ENCODE measurements at regions of chr7 and their contacts with region 1.

Region 1: DNA sequence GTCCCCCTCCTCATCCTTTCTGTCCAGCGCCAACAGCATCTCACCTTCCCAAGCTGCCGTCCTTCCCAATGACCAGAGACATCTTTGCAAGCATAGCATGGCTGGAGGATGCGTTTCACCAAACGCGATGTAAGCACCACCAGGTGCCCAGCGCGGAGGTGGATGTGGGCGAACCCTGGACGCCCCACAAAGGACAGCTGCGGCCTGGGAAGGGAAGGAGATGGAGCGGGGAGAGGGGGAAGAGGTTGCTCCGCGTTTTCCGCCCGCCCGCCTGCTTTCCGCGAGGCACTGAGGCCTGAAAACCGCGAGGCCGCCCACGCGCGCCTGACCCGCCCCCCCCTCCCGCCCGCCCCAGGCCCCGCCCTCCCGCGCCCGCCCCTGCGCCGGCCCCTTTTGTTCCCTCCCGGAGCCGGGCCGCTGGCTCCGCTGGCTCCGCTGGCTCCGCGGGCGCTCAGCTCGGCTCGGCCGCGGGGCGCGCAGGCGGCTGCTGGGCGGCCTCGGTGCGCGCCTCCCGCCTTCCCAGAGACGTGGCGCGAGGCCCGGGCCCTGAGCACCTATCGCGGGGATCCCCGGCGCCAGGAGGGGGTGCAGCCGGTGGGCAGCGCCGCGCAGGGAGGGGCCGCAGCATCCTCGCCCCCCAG is at the start of gene CLIP2:
- DNase-seq: peak; percentile 69
- ATAC-seq: peak; percentile 62
- H3K4me3 Mint-ChIP-seq: peak within 1 kb of the TSS; percentile 91
- H3K27ac Mint-ChIP-seq: peak within 1 kb of the TSS; percentile 91
- H3K4me1 Mint-ChIP-seq: peaks cover 62% of the 10 kb centered on the region
- H3K27me3 Mint-ChIP-seq: no peaks in the 10 kb centered on the region
- CTCF ChIP-seq: no peak
- total RNA-seq, gene CLIP2: 60.4 and 61.7 TPM in 2 replicates

Region 2: DNA sequence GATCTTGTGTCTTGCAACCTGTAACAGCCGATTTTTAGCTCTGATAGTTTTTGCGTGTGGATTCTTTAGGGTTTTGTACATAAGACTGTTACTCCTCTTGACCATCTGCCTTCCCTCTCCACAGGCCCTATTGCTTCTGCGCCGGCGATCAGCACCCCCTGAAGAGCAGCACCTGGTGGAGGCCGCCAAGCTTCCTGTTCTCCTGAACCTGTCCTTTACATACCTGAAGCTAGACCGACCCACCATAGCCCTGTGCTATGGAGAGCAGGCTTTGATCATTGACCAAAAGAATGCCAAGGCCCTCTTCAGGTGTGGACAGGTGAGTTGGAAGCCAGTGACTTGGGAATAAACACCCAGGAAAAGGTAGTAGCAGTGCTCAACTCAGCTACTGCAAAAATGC is 948.6 kb before region 1 on chr7:
- CTCF ChIA-PET with region 1: no interaction called
- POLR2A ChIA-PET with region 1: no interaction called
- intact Hi-C with region 1: no loop called
- DNase-seq: no peak
- ATAC-seq: no peak
- H3K4me3 Mint-ChIP-seq: no peak overlapping the region
- H3K27ac Mint-ChIP-seq: no peak overlapping the region
- H3K4me1 Mint-ChIP-seq: peaks cover 2% of the 10 kb centered on the region
- H3K27me3 Mint-ChIP-seq: peaks cover 11% of the 10 kb centered on the region
- CTCF ChIP-seq: no peak

Region 3: DNA sequence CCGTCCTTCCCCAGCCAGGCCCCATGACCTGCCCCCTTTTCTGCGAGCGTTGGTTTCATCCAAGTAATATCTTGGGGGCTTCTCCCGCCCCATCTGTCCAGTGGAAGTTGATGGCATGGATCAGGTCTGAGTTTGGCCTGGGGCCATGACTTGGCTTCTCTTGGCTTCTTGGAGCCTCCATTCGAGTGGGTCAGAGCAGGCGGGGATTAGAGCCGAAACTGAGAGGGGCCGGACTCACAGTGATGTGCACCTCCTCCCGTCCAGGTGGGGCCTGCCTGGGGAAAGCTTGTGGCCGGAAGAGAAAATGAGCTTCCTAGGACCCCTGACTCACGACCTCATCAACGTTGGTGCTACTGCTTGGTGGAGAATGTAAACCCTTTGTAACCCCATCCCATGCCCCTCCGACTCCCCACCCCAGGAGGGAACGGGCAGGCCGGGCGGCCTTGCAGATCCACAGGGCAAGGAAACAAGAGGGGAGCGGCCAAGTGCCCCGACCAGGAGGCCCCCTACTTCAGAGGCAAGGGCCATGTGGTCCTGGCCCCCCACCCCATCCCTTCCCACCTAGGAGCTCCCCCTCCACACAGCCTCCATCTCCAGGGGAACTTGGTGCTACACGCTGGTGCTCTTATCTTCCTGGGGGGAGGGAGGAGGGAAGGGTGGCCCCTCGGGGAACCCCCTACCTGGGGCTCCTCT is 220.6 kb before region 1 on chr7:
- CTCF ChIA-PET with region 1: no interaction called
- POLR2A ChIA-PET with region 1: no interaction called
- intact Hi-C with region 1: loop called (anchors 5 kb)
- DNase-seq: no peak
- ATAC-seq: no peak
- H3K4me3 Mint-ChIP-seq: no peak overlapping the region
- H3K27ac Mint-ChIP-seq: no peak overlapping the region
- H3K4me1 Mint-ChIP-seq: peaks cover 2% of the 10 kb centered on the region
- H3K27me3 Mint-ChIP-seq: no peaks in the 10 kb centered on the region
- CTCF ChIP-seq: no peak

Region 4: GRCh38 chr7:74217455-74218342 is 71.4 kb before region 1 on chr7:
- CTCF ChIA-PET with region 1: no interaction called
- POLR2A ChIA-PET with region 1: interaction called, 150 read pairs
- intact Hi-C with region 1: no loop called
- DNase-seq: peak; percentile 51
- ATAC-seq: peak; percentile 59
- H3K4me3 Mint-ChIP-seq: peak overlapping the region; percentile 69
- H3K27ac Mint-ChIP-seq: peak overlapping the region; percentile 90
- H3K4me1 Mint-ChIP-seq: peaks cover 63% of the 10 kb centered on the region
- H3K27me3 Mint-ChIP-seq: no peaks in the 10 kb centered on the region
- CTCF ChIP-seq: no peak

Region 5: DNA sequence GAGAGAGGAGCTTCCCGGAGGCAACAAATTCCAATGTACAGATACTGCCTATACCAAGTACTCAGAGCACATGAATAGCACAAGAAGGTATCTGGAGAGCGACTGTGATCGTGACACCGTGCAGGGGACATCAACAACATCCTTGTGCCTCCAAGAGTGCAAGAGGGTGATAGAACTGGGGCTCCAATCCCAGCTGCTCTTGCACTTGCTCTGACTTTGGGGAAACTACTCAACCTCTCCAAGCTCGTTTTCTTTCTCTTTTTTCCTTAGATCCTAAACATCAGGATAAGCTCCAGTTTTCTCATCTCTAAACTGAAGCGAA is 47.1 kb before region 1 on chr7:
- CTCF ChIA-PET with region 1: no interaction called
- POLR2A ChIA-PET with region 1: interaction called, 10 read pairs
- intact Hi-C with region 1: no loop called
- DNase-seq: no peak
- ATAC-seq: peak; percentile 30
- H3K4me3 Mint-ChIP-seq: peak overlapping the region; percentile 74
- H3K27ac Mint-ChIP-seq: peak overlapping the region; percentile 81
- H3K4me1 Mint-ChIP-seq: peaks cover 32% of the 10 kb centered on the region
- H3K27me3 Mint-ChIP-seq: no peaks in the 10 kb centered on the region
- CTCF ChIP-seq: no peak

Region 6: DNA sequence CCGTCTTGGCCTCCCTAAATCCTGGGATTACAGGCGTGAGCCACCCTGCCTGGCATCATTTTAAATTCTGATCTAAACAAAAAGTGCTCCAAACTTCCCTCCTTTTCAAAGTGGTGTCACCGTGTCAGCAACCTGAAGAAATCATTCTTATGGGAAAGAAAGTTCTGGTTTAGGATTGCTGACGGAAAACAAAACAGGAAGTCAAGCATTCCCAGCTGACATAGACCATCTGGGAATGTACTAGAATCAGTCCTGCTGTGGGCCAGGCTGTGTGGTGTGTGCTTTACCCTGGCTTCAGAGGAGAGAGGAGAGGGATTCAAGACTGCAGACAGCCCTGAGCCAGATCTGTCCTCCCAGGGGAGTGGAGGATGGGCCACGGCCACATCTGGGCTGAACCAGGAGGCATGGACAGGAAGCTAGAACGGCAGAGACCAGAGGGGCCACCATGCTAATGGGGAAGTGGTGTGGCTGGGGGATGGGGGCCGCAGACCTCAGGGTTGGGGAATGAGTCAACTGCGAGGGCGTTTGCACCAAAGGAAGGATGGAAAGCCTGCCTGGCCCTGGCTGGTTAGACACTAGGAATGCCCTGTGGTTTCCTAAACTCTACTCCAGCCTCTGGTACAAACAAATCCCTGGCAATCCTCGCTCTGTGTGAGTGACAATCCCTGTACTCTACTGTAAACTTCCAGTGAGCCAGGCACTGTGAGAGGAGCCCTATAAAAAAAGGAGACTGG is 16.7 kb before region 1 on chr7:
- CTCF ChIA-PET with region 1: interaction called, 10 read pairs
- POLR2A ChIA-PET with region 1: interaction called, 344 read pairs
- intact Hi-C with region 1: loop called (anchors 1 kb)
- DNase-seq: peak; percentile 71
- ATAC-seq: peak; percentile 81
- H3K4me3 Mint-ChIP-seq: peak overlapping the region; percentile 70
- H3K27ac Mint-ChIP-seq: peak overlapping the region; percentile 80
- H3K4me1 Mint-ChIP-seq: peaks cover 55% of the 10 kb centered on the region
- H3K27me3 Mint-ChIP-seq: no peaks in the 10 kb centered on the region
- CTCF ChIP-seq: no peak

Region 7: GRCh38 chr7:74365322-74366022 is 76.3 kb after region 1 on chr7:
- CTCF ChIA-PET with region 1: no interaction called
- POLR2A ChIA-PET with region 1: interaction called, 12 read pairs
- intact Hi-C with region 1: no loop called
- DNase-seq: no peak
- ATAC-seq: no peak
- H3K4me3 Mint-ChIP-seq: no peak overlapping the region
- H3K27ac Mint-ChIP-seq: no peak overlapping the region
- H3K4me1 Mint-ChIP-seq: peaks cover under 1% of the 10 kb centered on the region
- H3K27me3 Mint-ChIP-seq: no peaks in the 10 kb centered on the region
- CTCF ChIP-seq: no peak

Measured in activated B cell treated with CpG ODN at 0.5 μM for 24 hours (primary cell).